ENCODE measurements at regions of chr1 and their contacts with region 1.

Region 1: GRCh38 chr1:204989266-204990058 is 53.5 kb upstream of the CNTN2 start:
- DNase-seq: peak in 1 of 2 experiments; percentile 68
- H3K4me3 ChIP-seq: no peak overlapping the region
- H3K27ac ChIP-seq: no peak overlapping the region
- H3K4me1 ChIP-seq: no peaks in the 10 kb centered on the region
- H3K27me3 ChIP-seq: peaks cover 99% of the 10 kb centered on the region
- CTCF ChIP-seq: peak; percentile 93

Region 2: DNA sequence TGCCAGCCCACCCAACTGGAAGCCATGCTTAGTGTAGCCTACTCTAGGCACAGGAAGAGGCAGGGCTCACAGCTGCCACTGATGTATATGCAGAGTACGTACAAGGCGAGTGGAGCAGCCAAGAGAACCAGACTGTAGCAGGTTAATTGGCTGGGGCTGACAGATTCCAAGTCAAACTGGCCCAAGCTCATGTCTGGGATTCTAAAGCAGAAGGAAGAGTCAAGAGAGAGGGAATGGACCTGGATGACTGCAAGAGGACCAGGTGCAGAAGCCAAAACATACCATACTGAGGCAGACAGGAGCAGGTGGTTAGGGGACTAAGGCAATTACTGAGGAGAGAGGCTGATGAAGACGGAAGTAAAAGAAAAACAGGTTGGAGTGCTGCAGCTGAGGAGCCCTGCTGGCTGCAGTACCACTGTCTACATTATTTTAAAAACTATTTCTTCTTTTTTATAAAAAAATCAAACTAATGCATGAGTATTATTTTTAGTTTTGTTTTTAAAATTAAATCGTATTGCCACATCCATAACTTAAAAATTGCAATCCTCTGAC is 252.6 kb before region 1 on chr1:
- CTCF ChIA-PET with region 1: no interaction called
- POLR2A ChIA-PET with region 1: no interaction called
- intact Hi-C with region 1: no loop called
- DNase-seq: no peak
- H3K4me3 ChIP-seq: no peak overlapping the region
- H3K27ac ChIP-seq: no peak overlapping the region
- H3K4me1 ChIP-seq: no peaks in the 10 kb centered on the region
- H3K27me3 ChIP-seq: peaks cover 17% of the 10 kb centered on the region; the same call in 1 of the 2 replicates
- CTCF ChIP-seq: no peak

Region 3: DNA sequence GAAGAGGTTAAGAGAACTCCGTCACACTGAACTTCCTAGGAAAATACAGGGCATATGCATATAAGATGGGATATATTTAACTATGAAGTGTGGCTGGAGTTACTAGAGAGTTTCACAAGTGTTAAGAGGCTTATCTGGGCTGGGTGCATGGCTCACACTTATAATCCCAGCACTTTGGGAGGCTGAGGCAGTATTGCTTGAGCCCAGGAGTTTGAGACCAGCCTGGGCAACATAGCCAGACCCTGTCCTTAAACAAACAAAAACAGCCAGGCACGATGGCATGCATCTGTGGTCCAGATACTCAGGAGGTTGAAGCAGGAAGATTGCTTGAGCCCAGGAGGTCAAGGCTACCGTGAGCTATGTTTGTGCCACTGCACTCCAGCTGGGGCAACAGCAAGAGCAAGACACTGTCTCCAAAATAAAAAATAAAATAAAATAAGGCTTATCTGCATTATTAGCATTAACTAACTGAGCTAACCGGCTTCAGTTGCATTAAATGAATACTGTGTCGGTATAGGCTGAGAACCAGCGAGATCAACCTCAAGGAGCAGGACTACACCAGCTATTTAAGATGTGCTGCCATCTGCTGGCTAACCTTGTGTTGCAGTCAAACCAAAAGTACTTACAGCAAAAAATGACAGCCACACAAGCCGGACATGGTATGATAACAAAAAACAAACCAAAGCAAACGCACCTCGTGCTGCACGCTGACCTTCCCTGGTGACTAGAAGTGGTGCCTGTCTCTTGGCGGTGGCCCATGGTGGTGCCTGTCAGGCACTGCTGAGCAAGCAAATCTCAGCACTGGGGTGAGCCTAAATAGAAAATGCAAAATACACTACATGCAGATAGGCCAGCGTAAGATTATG is 152.0 kb after region 1 on chr1:
- CTCF ChIA-PET with region 1: no interaction called
- POLR2A ChIA-PET with region 1: no interaction called
- intact Hi-C with region 1: loop called (anchors 1 kb)
- DNase-seq: peak; percentile 59
- H3K4me3 ChIP-seq: no peak overlapping the region
- H3K27ac ChIP-seq: no peak overlapping the region
- H3K4me1 ChIP-seq: peaks cover 11% of the 10 kb centered on the region
- H3K27me3 ChIP-seq: no peaks in the 10 kb centered on the region
- CTCF ChIP-seq: peak; percentile 87

Measured in PC-9 (cell line).